Natural killer cell (primary cell): ENCODE measurements at regions of chr6 and their contacts with region 1.

Region 1: GRCh38 chr6:44074439-44075136 is 52.7 kb downstream of the MRPL14 start:
- DNase-seq: peak; percentile 64 to 84
- ATAC-seq: peak; percentile 51 to 56 (median 54)
- H3K4me3 ChIP-seq: no peak overlapping the region
- H3K4me3 Mint-ChIP-seq: peak overlapping the region; percentile 68
- H3K27ac ChIP-seq: no peak overlapping the region
- H3K27ac Mint-ChIP-seq: peak overlapping the region in 1 of 2 donors; percentile 12
- H3K4me1 ChIP-seq: peaks cover 25% of the 10 kb centered on the region
- H3K4me1 Mint-ChIP-seq: peaks cover 7 to 18% of the 10 kb centered on the region in 2 donors
- H3K27me3 ChIP-seq: peaks cover 12% of the 10 kb centered on the region
- H3K27me3 Mint-ChIP-seq: peaks cover 25 to 29% of the 10 kb centered on the region in 2 donors
- CTCF ChIP-seq: peak; percentile 87

Region 2: GRCh38 chr6:43608310-43608763 is 466.3 kb before region 1 on chr6:
- intact Hi-C with region 1: loop called (anchors 1 kb)
- DNase-seq: peak; percentile 37 to 80
- ATAC-seq: peak in 2 of 3 donors; percentile 35 to 70
- H3K4me3 ChIP-seq: no peak overlapping the region
- H3K4me3 Mint-ChIP-seq: no peak overlapping the region
- H3K27ac ChIP-seq: no peak overlapping the region
- H3K27ac Mint-ChIP-seq: no peak overlapping the region
- H3K4me1 ChIP-seq: peaks cover 3% of the 10 kb centered on the region
- H3K4me1 Mint-ChIP-seq: peaks cover 4 to 5% of the 10 kb centered on the region in 2 donors
- H3K27me3 ChIP-seq: no peaks in the 10 kb centered on the region
- H3K27me3 Mint-ChIP-seq: no peaks in the 10 kb centered on the region
- CTCF ChIP-seq: peak; percentile 82

Region 3: DNA sequence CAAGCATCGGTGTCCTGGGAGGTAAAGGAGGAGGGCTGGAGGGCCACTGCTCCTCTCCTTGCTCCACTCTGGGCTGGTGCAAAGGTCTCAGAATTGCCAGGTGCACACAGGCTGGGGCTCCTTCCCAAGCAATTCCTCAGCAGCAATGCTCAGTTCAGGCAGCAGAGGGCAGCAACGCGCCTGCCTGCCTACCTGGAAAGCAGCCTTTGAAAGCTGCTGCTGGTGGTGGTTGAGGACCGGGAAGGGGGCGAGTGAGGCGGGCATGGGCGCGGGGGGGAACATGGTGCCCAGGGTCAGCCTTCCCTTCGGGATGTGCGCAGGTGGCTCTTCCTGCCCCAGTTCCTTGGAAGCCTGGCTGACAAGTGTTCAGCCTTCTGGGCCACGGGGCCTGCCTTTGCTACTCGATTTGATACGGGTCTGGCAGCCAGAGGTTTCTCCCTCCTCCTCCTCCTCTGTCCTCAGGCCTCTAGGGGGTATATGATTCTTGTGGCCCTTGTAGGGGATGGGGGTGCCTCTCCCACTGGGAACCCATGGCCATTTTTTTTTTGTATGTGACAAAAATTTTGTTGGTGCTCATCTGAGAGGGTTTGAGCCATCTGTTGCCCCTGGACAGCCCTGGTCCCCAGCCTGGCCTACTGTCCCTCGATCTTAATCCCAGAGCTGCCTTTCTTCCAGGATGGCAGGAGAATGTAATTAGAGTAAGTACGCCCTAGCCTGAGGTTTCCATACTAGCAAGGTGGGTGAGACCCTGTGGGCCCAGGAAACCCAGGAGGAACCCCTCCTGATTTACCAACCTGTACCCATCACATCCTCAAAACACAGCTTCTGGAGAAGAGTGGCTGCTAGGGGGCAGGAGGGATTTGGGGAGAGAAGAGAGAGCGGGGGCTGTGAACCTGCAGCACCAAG is 407.1 kb before region 1 on chr6:
- intact Hi-C with region 1: loop called (anchors 1 kb)
- DNase-seq: peak; percentile 80 to 88
- ATAC-seq: peak; percentile 77 to 88 (median 82)
- H3K4me3 ChIP-seq: no peak overlapping the region
- H3K4me3 Mint-ChIP-seq: no peak overlapping the region
- H3K27ac ChIP-seq: no peak overlapping the region
- H3K27ac Mint-ChIP-seq: peak overlapping the region in 1 of 2 donors; percentile 79
- H3K4me1 ChIP-seq: peaks cover 17% of the 10 kb centered on the region
- H3K4me1 Mint-ChIP-seq: peaks cover 6 to 14% of the 10 kb centered on the region in 2 donors
- H3K27me3 ChIP-seq: no peaks in the 10 kb centered on the region
- H3K27me3 Mint-ChIP-seq: no peaks in the 10 kb centered on the region
- CTCF ChIP-seq: peak; percentile 83

Region 4: GRCh38 chr6:43723737-43724295 is 350.8 kb before region 1 on chr6:
- intact Hi-C with region 1: loop called (anchors 1 kb)
- DNase-seq: peak; percentile 57 to 85
- ATAC-seq: peak; percentile 68 to 77 (median 72)
- H3K4me3 ChIP-seq: no peak overlapping the region
- H3K4me3 Mint-ChIP-seq: no peak overlapping the region
- H3K27ac ChIP-seq: no peak overlapping the region
- H3K27ac Mint-ChIP-seq: peak overlapping the region in 1 of 2 donors; percentile 82
- H3K4me1 ChIP-seq: peaks cover 25% of the 10 kb centered on the region
- H3K4me1 Mint-ChIP-seq: peaks cover 14 to 25% of the 10 kb centered on the region in 2 donors
- H3K27me3 ChIP-seq: no peaks in the 10 kb centered on the region
- H3K27me3 Mint-ChIP-seq: peaks cover 11 to 18% of the 10 kb centered on the region in 2 donors
- CTCF ChIP-seq: peak; percentile 58

Region 5: GRCh38 chr6:43769526-43770416 is 304.8 kb before region 1 on chr6 and contains the start of gene VEGFA:
- intact Hi-C with region 1: loop called (anchors 1 kb)
- DNase-seq: peak; percentile 85 to 93
- ATAC-seq: peak; percentile 79 to 92 (median 83)
- H3K4me3 ChIP-seq: peak within 1 kb of the TSS; percentile 45
- H3K4me3 Mint-ChIP-seq: peak within 1 kb of the TSS; percentile 97
- H3K27ac ChIP-seq: no peak within 1 kb of the TSS
- H3K27ac Mint-ChIP-seq: peak within 1 kb of the TSS; percentile 43 to 80
- H3K4me1 ChIP-seq: peaks cover 28% of the 10 kb centered on the region
- H3K4me1 Mint-ChIP-seq: peaks cover 10 to 25% of the 10 kb centered on the region in 2 donors
- H3K27me3 ChIP-seq: peaks cover 26% of the 10 kb centered on the region
- H3K27me3 Mint-ChIP-seq: peaks cover 7 to 35% of the 10 kb centered on the region in 2 donors
- CTCF ChIP-seq: peak; percentile 95
- total RNA-seq, gene VEGFA: 3.6 to 27.5 (median 3.7) TPM